ENCODE measurements at regions of chr11 and their contacts with region 1.

Region 1: DNA sequence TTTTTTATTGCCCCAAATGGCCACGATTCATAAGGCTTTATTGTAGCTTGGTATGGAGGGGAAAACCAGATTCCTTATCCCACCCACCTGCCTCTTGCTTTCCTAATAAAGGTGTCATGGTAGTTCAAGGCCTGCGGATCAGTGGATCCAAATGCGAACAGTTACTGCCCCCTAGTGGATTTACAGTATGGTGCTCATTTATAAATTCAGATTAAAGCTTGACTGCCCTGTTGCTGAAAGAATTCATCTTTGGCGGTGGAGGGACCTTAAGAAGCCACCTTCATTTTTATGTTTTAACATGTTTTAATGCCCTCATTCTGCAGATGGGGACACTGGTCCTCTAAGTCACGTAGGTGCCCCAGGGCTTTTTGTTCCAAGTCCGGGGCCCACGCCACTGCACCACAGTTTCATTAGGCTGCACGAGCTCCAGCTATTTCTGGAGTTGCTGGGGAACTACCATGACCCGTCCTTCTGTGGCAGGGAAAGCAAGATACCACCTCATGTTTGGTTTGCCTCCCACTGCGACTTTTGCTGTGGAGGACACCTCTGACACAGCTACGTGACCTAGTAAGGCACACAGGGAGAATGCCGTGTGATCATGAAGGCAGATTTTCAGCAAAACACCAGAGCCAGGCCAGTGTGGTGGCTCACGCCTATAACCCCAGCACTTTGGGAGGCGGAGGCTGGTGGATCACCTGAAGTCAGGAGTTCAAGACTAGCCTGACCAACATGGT is 15.6 kb upstream of the INCENP start:
- DNase-seq: peak in 1 of 2 experiments; percentile 19
- H3K4me3 ChIP-seq: no peak overlapping the region
- H3K27ac ChIP-seq: no peak overlapping the region
- H3K4me1 ChIP-seq: no peaks in the 10 kb centered on the region; a peak in 1 of 7 replicates
- H3K27me3 ChIP-seq: no peaks in the 10 kb centered on the region
- CTCF ChIP-seq: peak in 2 of 3 experiments; percentile 77 to 83; a peak in 3 of 4 replicates
- EP300 ChIP-seq: no peak
- POLR2A ChIP-seq: no peak
- RAD21 ChIP-seq: peak; percentile 93 to 94

Region 2: DNA sequence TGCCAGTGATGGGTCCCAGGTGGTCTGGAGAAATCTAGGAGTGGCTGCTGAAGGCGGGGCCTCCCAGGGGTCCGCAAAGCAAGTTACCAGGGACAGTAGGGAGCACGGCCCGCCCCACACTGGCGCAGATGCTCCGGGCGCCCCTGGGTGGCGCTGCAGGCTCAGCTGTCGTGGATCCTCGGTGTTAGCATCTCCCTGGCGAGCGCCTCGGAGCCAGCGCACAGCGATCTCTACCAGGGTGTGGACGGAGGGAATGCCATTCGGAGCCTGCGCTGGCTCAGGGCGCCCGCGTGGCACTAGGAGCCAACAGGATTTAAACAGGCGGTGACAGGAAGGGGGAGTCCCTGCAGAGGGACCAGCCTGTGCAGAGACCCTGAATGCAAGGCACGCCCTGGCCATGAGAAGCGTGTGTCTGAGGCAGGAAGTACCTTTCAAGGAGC is 237.0 kb before region 1 on chr11:
- CTCF ChIA-PET with region 1: interaction called, 49 read pairs
- POLR2A ChIA-PET with region 1: interaction called, 4 read pairs
- DNase-seq: peak; percentile 73 to 94
- H3K4me3 ChIP-seq: peak overlapping the region in 2 of 4 experiments; percentile 22 to 30; a peak in 5 of 8 replicates
- H3K27ac ChIP-seq: no peak overlapping the region
- H3K4me1 ChIP-seq: peaks cover 4 to 14% (median 4%) of the 10 kb centered on the region in 4 experiments; a peak in 6 of 7 replicates
- H3K27me3 ChIP-seq: peaks cover 0 to 11% (median 8%) of the 10 kb centered on the region in 4 experiments; a peak in 5 of 7 replicates
- CTCF ChIP-seq: peak in 2 of 3 experiments; percentile 94 to 97; a peak in 3 of 4 replicates
- EP300 ChIP-seq: 0 out of 3 replicates have a peak, but pooled peaks of 1 of the 2 experiments have one; percentile 27
- POLR2A ChIP-seq: no peak
- RAD21 ChIP-seq: peak; percentile 97 to 98

Region 3: DNA sequence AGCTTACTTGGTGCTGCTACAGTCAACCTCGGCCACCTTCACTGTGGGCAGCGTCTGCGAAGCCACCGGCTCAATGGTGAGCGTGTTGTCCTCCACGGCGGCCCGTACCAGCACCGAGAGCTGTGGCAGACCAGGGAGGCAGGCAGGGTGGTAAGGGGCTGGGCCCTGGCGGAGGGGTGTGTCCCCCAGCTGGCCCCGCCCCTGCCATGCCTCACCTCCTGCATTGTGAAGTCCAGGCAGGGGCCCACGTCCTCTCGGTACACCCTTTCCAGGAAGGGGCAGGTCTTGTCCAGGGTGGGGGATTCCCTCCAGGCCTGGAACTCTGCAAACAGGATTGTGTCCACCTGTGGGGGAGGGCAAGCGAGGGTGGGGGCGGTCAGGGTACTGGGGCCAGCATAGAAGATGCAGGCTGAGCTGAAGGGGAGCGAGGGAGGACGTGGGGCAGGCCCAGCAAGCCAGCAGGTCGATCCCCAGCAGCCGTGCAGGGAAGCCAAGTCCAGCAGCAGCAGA is 203.6 kb before region 1 on chr11:
- CTCF ChIA-PET with region 1: interaction called, 132 read pairs
- POLR2A ChIA-PET with region 1: interaction called, 3 read pairs
- DNase-seq: peak in 1 of 2 experiments; percentile 90
- H3K4me3 ChIP-seq: peak overlapping the region in 2 of 4 experiments; percentile 26 to 51; a peak in 4 of 8 replicates
- H3K27ac ChIP-seq: no peak overlapping the region
- H3K4me1 ChIP-seq: peaks cover 0 to 31% (median 19%) of the 10 kb centered on the region in 4 experiments; a peak in 6 of 7 replicates
- H3K27me3 ChIP-seq: no peaks in the 10 kb centered on the region
- CTCF ChIP-seq: no peak
- EP300 ChIP-seq: no peak
- POLR2A ChIP-seq: no peak
- RAD21 ChIP-seq: no peak

Region 4: DNA sequence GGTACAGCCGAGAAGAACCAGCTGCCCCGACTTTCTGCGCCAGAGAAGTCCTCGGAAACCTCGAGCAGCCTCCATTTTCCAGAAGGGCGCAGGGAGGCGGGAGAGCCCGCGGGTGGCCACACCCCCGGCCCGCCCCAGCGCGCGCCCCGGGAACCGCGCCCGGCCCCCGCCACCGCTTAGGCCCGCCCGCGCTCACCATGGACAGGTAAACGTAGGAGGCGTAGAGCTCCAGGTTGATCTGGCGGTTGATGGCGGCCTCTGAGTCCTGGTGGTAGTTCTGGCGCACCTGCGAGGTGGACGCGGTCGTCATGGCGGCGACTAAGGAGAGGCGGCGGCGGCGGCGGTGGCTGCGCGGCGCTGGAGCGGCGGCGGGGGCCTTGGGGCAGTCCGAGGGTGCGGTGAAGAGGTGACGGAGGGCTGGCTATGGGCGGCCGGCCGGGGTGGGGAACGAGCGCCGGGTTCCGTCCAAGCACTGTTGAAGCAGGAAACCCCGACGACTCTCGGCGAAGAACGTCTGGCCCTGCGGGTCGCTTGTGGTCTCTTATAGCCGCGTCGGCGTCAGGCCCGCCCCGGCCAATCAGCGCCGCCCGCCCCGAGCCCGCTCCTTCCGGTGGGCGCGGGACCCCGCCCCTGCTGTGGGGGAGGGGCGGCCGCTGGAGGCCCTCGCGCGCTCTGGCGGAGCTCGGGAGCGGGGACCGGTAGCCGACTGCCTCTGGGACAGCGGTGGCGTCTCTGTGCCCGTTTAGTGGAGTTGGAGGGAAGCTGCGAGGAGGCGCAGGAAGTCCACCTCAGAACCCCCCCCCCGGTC is 140.9 kb before region 1 on chr11 and contains the start of gene FTH1:
- CTCF ChIA-PET with region 1: interaction called, 15 read pairs
- POLR2A ChIA-PET with region 1: interaction called, 10 read pairs
- DNase-seq: peak; percentile 56 to 90
- H3K4me3 ChIP-seq: peak within 1 kb of the TSS; percentile 89 to 97 (median 96)
- H3K27ac ChIP-seq: peak within 1 kb of the TSS; percentile 96
- H3K4me1 ChIP-seq: peaks cover 9 to 20% (median 13%) of the 10 kb centered on the region in 4 experiments
- H3K27me3 ChIP-seq: no peaks in the 10 kb centered on the region
- CTCF ChIP-seq: no peak
- EP300 ChIP-seq: peak in 1 of 2 experiments; percentile 57; a peak in 2 of 3 replicates
- POLR2A ChIP-seq: peak; percentile 90 to 96
- RAD21 ChIP-seq: no peak
- total RNA-seq, gene FTH1: 1,461 and 1,535 TPM in 2 replicates

Region 5: DNA sequence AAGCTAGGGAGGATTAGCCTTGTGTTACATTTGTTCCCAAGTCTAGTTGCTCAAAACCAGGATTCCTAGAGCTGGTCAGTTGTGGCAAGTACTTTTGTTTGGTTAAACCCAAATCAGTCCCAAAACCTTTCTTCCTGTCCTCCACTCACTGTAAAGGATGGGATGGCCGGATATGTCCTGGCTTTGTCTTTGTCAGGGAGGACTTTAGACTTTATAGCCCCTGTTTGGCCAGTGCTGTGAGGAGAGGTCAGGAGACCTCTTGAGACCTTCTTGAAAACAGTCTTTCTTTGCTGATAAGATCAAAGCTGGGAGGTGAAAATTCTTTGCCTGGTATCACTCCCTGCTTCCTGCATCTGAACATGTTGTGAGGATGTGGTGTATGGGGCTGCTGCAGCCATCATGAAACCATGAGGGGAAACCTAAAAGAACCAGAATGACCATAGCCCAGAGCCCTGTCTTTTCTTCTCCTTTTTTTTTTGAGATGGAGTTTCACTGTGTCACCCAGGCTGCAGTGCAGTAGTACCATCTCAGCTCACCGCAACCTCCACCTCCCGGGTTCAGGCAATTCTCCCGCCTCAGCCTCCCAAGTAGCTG is 97.2 kb before region 1 on chr11:
- CTCF ChIA-PET with region 1: no interaction called
- POLR2A ChIA-PET with region 1: no interaction called
- DNase-seq: no peak
- H3K4me3 ChIP-seq: no peak overlapping the region
- H3K27ac ChIP-seq: no peak overlapping the region
- H3K4me1 ChIP-seq: peaks cover 0 to 3% (median 0%) of the 10 kb centered on the region in 4 experiments; a peak in 1 of 7 replicates
- H3K27me3 ChIP-seq: no peaks in the 10 kb centered on the region
- CTCF ChIP-seq: no peak
- EP300 ChIP-seq: no peak
- POLR2A ChIP-seq: no peak
- RAD21 ChIP-seq: no peak

Region 6: GRCh38 chr11:62122076-62122475 is 13.9 kb after region 1 on chr11:
- CTCF ChIA-PET with region 1: interaction called, 34 read pairs
- POLR2A ChIA-PET with region 1: interaction called, 4 read pairs
- DNase-seq: no peak
- H3K4me3 ChIP-seq: no peak overlapping the region
- H3K27ac ChIP-seq: no peak overlapping the region
- H3K4me1 ChIP-seq: peaks cover 0 to 11% (median 7%) of the 10 kb centered on the region in 4 experiments; a peak in 5 of 7 replicates
- H3K27me3 ChIP-seq: no peaks in the 10 kb centered on the region
- CTCF ChIP-seq: peak; percentile 52 to 72 (median 53)
- EP300 ChIP-seq: no peak
- POLR2A ChIP-seq: no peak
- RAD21 ChIP-seq: peak; percentile 25 to 41; a peak in 2 of 4 replicates

Region 7: GRCh38 chr11:62176766-62177165 is 68.6 kb after region 1 on chr11:
- CTCF ChIA-PET with region 1: no interaction called
- POLR2A ChIA-PET with region 1: no interaction called
- DNase-seq: no peak
- H3K4me3 ChIP-seq: no peak overlapping the region
- H3K27ac ChIP-seq: no peak overlapping the region
- H3K4me1 ChIP-seq: no peaks in the 10 kb centered on the region
- H3K27me3 ChIP-seq: no peaks in the 10 kb centered on the region
- CTCF ChIP-seq: no peak
- EP300 ChIP-seq: no peak
- POLR2A ChIP-seq: no peak
- RAD21 ChIP-seq: no peak